Activated CD4-positive, alpha-beta T cell treated with anti-CD3 and anti-CD28 coated beads for 36 hours (primary cell): ENCODE measurements at regions of chrX and their contacts with region 1.

Region 1: GRCh38 chrX:65744965-65745364 is 77.5 kb downstream of the MSN start:
- DNase-seq: no peak
- ATAC-seq: peak; percentile 4
- H3K4me3 Mint-ChIP-seq: no peak overlapping the region
- H3K27ac Mint-ChIP-seq: no peak overlapping the region
- H3K4me1 Mint-ChIP-seq: peaks cover 60% of the 10 kb centered on the region
- H3K27me3 Mint-ChIP-seq: no peaks in the 10 kb centered on the region

Region 2: GRCh38 chrX:65731684-65732289 is 13.2 kb before region 1 on chrX:
- CTCF ChIA-PET with region 1: no interaction called
- POLR2A ChIA-PET with region 1: no interaction called
- intact Hi-C with region 1: loop called in 1 of 2 experiments (anchors 1 kb)
- DNase-seq: peak; percentile 25
- ATAC-seq: peak; percentile 62
- H3K4me3 Mint-ChIP-seq: no peak overlapping the region
- H3K27ac Mint-ChIP-seq: peak overlapping the region; percentile 85
- H3K4me1 Mint-ChIP-seq: peaks cover 60% of the 10 kb centered on the region
- H3K27me3 Mint-ChIP-seq: no peaks in the 10 kb centered on the region

Region 3: DNA sequence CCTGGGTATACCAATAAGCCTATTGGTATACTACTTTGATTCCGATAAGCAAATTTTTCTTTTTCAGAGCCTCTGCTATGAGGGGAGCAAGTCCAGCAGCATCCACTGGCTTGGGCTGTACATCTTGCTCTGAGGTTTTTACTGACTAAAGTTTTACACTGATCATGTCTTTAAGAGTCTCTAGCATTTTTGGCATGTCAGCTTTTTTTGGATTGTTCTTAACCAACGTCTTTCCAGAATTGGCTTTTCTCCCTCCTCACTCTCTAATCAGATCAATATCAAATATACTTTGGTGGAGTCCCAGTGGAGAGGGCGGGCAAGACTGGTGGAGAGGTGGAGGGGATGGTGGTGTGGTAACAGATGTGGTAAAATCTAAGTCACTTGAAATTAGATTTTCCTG is 615.9 kb after region 1 on chrX:
- CTCF ChIA-PET with region 1: no interaction called
- POLR2A ChIA-PET with region 1: no interaction called
- intact Hi-C with region 1: no loop called
- DNase-seq: no peak
- ATAC-seq: no peak
- H3K4me3 Mint-ChIP-seq: no peak overlapping the region
- H3K27ac Mint-ChIP-seq: no peak overlapping the region
- H3K4me1 Mint-ChIP-seq: no peaks in the 10 kb centered on the region
- H3K27me3 Mint-ChIP-seq: no peaks in the 10 kb centered on the region